Head of caudate nucleus (tissue), 42 donors: ENCODE measurements at regions of chr1 and their contacts with region 1.

Region 1: DNA sequence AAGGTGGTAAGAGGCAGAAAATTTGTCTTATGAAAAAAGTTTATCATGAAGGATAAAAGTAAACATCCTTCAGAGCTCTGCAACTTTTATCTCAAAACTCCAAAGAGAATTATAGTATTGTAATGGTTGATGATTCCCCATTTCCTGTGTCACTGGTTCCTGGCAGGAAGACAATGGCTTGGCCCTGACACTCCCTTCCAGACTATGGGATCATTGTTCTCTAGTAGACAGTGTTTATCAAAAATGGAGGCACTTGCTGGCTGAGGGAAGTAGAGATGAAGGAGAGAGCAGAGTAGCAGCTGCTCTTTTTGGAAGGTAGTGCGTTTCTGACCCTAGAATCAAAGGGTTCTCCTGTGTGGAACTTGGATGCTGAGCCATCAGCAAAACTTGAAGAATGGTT is 145.9 kb upstream of the ATP1B1 start:
- DNase-seq: peak in 40 of 42 donors; percentile 15 to 88 (median 67)

Region 2: GRCh38 chr1:168752171-168752832 is 208.3 kb before region 1 on chr1:
- intact Hi-C with region 1: no loop called
- DNase-seq: no peak

Region 3: GRCh38 chr1:169115891-169116585 is 155.4 kb after region 1 on chr1:
- intact Hi-C with region 1: loop called (anchors 10 kb)
- DNase-seq: peak in 32 of 42 donors; percentile 34 to 78 (median 52)